ENCODE measurements at regions of chr2 and their contacts with region 1.

Region 1: GRCh38 chr2:200373973-200374416 is 67.5 kb downstream of the SPATS2L start:
- DNase-seq: peak in 7 of 9 donors; percentile 41 to 66 (median 56)
- ATAC-seq: peak; percentile 86
- H3K4me3 ChIP-seq: peak overlapping the region; percentile 74
- H3K4me3 Mint-ChIP-seq: peak overlapping the region; percentile 74 to 96 (median 89)
- H3K27ac ChIP-seq: peak overlapping the region; percentile 66
- H3K27ac Mint-ChIP-seq: peak overlapping the region; percentile 86 to 96 (median 93)
- H3K4me1 ChIP-seq: peaks cover 32 to 34% of the 10 kb centered on the region in 2 donors
- H3K4me1 Mint-ChIP-seq: peaks cover 24 to 59% (median 52%) of the 10 kb centered on the region in 7 donors
- H3K27me3 ChIP-seq: no peaks in the 10 kb centered on the region
- H3K27me3 Mint-ChIP-seq: no peaks in the 10 kb centered on the region

Region 2: DNA sequence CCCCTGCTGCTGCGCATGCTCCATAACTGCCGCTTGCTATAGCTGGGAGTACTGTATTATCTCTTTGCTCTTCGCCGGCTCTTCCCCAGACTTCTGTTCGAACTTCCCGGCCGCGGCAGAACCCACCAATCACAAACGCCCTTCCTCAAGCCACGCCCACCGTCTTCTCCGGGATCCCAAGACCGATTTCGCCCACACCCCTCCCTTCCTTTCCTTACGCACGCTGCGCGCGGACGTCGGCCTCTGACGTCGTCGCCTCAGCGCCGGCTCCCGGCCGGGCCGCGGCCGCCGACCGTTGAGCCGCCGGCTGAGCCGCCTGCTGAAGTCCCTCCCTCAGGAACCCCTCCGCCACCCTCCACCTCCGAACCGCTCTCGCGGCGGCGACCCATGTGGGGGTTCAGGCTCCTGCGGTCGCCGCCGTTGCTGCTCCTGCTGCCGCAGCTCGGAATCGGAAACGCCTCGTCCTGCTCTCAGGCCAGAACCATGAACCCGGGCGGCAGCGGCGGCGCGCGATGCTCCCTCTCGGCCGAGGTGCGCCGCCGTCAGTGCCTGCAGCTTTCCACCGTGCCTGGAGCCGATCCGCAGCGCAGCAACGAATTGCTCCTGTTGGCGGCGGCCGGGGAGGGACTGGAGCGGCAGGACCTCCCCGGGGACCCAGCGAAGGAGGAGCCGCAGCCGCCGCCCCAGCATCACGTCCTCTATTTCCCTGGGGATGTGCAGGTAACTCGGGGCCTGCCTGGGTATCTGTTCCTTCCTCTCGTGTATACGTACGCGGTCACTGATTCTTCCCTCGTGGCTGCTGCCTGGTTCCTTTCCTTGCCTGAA is 462.7 kb before region 1 on chr2 and contains the start of gene C2orf69:
- CTCF ChIA-PET with region 1: no interaction called
- POLR2A ChIA-PET with region 1: no interaction called
- intact Hi-C with region 1: loop called in 1 of 2 experiments (anchors 5 kb)
- DNase-seq: peak; percentile 80 to 92 (median 83)
- ATAC-seq: peak; percentile 93
- H3K4me3 ChIP-seq: peak within 1 kb of the TSS; percentile 75
- H3K4me3 Mint-ChIP-seq: peak within 1 kb of the TSS; percentile 89 to 100 (median 98)
- H3K27ac ChIP-seq: peak within 1 kb of the TSS; percentile 89
- H3K27ac Mint-ChIP-seq: peak within 1 kb of the TSS; percentile 72 to 95 (median 94)
- H3K4me1 ChIP-seq: peaks cover 11 to 19% of the 10 kb centered on the region in 2 donors
- H3K4me1 Mint-ChIP-seq: peaks cover 26 to 47% (median 37%) of the 10 kb centered on the region in 7 donors
- H3K27me3 ChIP-seq: no peaks in the 10 kb centered on the region
- H3K27me3 Mint-ChIP-seq: peaks cover 0 to 14% (median 8%) of the 10 kb centered on the region in 5 donors
- total RNA-seq, gene C2orf69: 10.1 to 15.4 (median 12.7) TPM

Region 3: DNA sequence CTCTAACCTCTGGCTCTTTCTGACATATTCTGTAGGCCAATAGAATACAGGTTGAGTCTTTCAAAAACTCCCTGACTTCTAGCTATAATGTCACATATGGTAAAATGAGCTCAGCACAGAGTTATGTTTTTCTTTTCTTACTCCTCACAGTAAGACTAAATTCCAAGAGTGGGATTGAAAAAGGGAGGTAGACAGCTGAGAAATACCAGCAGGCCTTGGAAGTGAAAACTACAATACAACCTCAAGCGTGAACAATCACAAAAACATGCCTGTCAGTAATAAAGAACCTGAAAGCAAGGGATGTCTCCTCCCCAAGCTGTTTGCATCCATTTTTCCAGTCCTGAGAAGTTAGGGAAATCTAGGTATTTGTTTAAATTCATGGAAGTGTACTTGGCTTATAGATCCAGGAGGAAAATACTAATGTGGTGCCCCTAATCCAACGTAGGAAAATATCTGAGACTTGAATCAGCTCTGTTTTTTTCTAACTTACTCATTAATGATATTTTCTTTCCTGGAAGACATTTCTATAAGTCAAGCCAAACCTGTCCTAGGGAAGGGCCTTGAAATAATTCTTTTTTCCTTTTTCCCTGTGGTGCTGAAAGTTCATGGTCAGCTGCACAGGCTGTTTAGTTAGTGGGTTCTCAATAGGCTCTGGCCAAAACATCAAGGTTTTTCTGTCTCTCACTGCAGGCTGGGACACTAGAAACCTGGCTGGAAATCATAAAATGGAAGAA is 235.4 kb before region 1 on chr2:
- CTCF ChIA-PET with region 1: no interaction called
- POLR2A ChIA-PET with region 1: no interaction called
- intact Hi-C with region 1: no loop called
- DNase-seq: no peak
- ATAC-seq: no peak
- H3K4me3 ChIP-seq: no peak overlapping the region
- H3K4me3 Mint-ChIP-seq: no peak overlapping the region
- H3K27ac ChIP-seq: no peak overlapping the region
- H3K27ac Mint-ChIP-seq: no peak overlapping the region
- H3K4me1 ChIP-seq: no peaks in the 10 kb centered on the region
- H3K4me1 Mint-ChIP-seq: no peaks in the 10 kb centered on the region
- H3K27me3 ChIP-seq: no peaks in the 10 kb centered on the region
- H3K27me3 Mint-ChIP-seq: peaks cover 0 to 7% (median 0%) of the 10 kb centered on the region in 5 donors

Region 4: DNA sequence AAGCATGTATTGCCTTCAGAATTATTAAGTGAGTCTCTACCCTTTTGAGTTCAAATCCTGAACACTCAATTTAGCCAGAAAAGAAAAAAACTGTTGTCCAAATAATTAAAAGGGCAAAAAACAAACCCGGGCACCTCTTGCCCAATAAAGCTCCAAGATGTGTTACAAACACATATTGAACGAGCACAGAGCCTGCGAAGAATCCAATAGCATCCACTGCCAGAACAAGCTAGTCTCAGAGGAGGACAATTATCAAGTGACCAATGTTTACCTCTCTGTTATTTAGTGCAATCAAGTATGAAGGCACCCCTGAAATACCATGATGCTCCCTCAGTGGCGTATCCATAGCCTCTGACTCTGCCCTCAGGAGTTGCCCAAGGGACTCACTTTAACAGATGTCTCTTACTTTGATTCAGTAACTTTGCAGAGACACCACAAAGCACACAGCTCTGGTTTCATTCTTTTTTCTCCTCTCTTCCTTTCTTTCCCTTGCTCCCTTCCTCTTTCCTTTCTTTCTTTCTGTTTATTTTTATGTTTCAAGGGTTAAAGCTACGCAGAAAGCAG is 161.1 kb before region 1 on chr2:
- CTCF ChIA-PET with region 1: no interaction called
- POLR2A ChIA-PET with region 1: no interaction called
- intact Hi-C with region 1: no loop called
- DNase-seq: no peak
- ATAC-seq: no peak
- H3K4me3 ChIP-seq: no peak overlapping the region
- H3K4me3 Mint-ChIP-seq: no peak overlapping the region
- H3K27ac ChIP-seq: no peak overlapping the region
- H3K27ac Mint-ChIP-seq: no peak overlapping the region
- H3K4me1 ChIP-seq: no peaks in the 10 kb centered on the region
- H3K4me1 Mint-ChIP-seq: peaks cover 0 to 1% (median 0%) of the 10 kb centered on the region in 7 donors
- H3K27me3 ChIP-seq: no peaks in the 10 kb centered on the region
- H3K27me3 Mint-ChIP-seq: peaks cover 6 to 34% (median 15%) of the 10 kb centered on the region in 5 donors

Region 5: GRCh38 chr2:200306196-200306930 is 67.6 kb before region 1 on chr2 and contains the start of gene SPATS2L:
- CTCF ChIA-PET with region 1: no interaction called
- POLR2A ChIA-PET with region 1: no interaction called
- intact Hi-C with region 1: loop called (anchors 2 kb)
- DNase-seq: peak in 7 of 9 donors; percentile 12 to 36 (median 22)
- ATAC-seq: peak; percentile 58
- H3K4me3 ChIP-seq: peak within 1 kb of the TSS; percentile 63
- H3K4me3 Mint-ChIP-seq: peak within 1 kb of the TSS; percentile 86 to 96 (median 92)
- H3K27ac ChIP-seq: no peak within 1 kb of the TSS
- H3K27ac Mint-ChIP-seq: peak within 1 kb of the TSS in 7 of 9 donors; percentile 14 to 88 (median 63)
- H3K4me1 ChIP-seq: peaks cover 0 to 4% of the 10 kb centered on the region in 2 donors
- H3K4me1 Mint-ChIP-seq: peaks cover 7 to 32% (median 11%) of the 10 kb centered on the region in 7 donors
- H3K27me3 ChIP-seq: no peaks in the 10 kb centered on the region
- H3K27me3 Mint-ChIP-seq: peaks cover 0 to 58% (median 16%) of the 10 kb centered on the region in 5 donors
- total RNA-seq, gene SPATS2L: 2.3 to 51.9 (median 3.5) TPM

Region 6: GRCh38 chr2:200471324-200471848 is 97.4 kb after region 1 on chr2:
- CTCF ChIA-PET with region 1: interaction called, 4 read pairs
- POLR2A ChIA-PET with region 1: interaction called, 19 read pairs
- intact Hi-C with region 1: loop called (anchors 1 kb)
- DNase-seq: peak in 7 of 9 donors; percentile 20 to 47 (median 39)
- ATAC-seq: peak; percentile 56
- H3K4me3 ChIP-seq: no peak overlapping the region
- H3K4me3 Mint-ChIP-seq: peak overlapping the region in 7 of 10 donors; percentile 1 to 81 (median 46)
- H3K27ac ChIP-seq: no peak overlapping the region
- H3K27ac Mint-ChIP-seq: peak overlapping the region in 3 of 9 donors; percentile 32 to 64 (median 44)
- H3K4me1 ChIP-seq: peaks cover 20 to 30% of the 10 kb centered on the region in 2 donors
- H3K4me1 Mint-ChIP-seq: peaks cover 23 to 41% (median 35%) of the 10 kb centered on the region in 7 donors
- H3K27me3 ChIP-seq: no peaks in the 10 kb centered on the region
- H3K27me3 Mint-ChIP-seq: no peaks in the 10 kb centered on the region

Region 7: DNA sequence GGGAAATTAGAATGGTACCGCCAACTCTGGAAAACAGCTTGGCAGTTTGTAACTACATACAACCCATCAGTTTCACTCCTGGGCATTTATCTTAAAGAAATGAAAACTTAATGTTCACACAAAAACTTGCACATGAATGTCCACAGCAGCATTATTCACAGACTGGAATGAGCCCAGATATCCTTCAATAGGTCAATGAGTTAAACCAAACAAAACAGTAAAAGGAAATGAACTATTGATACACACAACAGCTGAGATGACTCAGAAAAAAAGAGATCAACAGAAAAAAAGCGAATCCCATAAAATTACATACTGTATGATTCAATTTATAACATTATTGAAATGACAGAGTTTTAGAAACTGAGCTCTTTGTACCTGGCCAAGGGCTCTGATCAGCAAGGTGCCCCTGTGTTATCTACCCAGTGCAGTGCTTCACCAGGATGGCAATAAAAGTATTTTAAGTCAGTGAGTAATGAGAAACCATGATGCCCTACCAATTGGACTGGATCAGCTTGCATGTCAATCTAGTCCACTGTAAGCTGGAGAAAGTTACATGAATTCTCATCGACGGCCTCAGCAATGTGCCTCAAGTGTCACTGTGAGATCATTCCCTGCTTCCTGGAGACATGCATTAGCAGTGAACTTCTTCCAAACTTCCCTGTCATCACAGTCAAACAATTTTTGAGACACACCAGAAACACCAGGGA is 1247.5 kb after region 1 on chr2:
- CTCF ChIA-PET with region 1: no interaction called
- POLR2A ChIA-PET with region 1: no interaction called
- intact Hi-C with region 1: no loop called
- DNase-seq: no peak
- ATAC-seq: no peak
- H3K4me3 ChIP-seq: no peak overlapping the region
- H3K4me3 Mint-ChIP-seq: no peak overlapping the region
- H3K27ac ChIP-seq: no peak overlapping the region
- H3K27ac Mint-ChIP-seq: no peak overlapping the region
- H3K4me1 ChIP-seq: no peaks in the 10 kb centered on the region
- H3K4me1 Mint-ChIP-seq: no peaks in the 10 kb centered on the region
- H3K27me3 ChIP-seq: no peaks in the 10 kb centered on the region
- H3K27me3 Mint-ChIP-seq: peaks cover 0 to 3% (median 0%) of the 10 kb centered on the region in 5 donors

Region 8: GRCh38 chr2:201780674-201781581 is 1406.9 kb after region 1 on chr2 and contains the start of gene ALS2:
- CTCF ChIA-PET with region 1: no interaction called
- POLR2A ChIA-PET with region 1: no interaction called
- intact Hi-C with region 1: loop called in 1 of 2 experiments (anchors 5 kb)
- DNase-seq: peak; percentile 91 to 97 (median 95)
- ATAC-seq: peak; percentile 96
- H3K4me3 ChIP-seq: peak within 1 kb of the TSS; percentile 96
- H3K4me3 Mint-ChIP-seq: peak within 1 kb of the TSS; percentile 87 to 99 (median 98)
- H3K27ac ChIP-seq: peak within 1 kb of the TSS; percentile 84
- H3K27ac Mint-ChIP-seq: peak within 1 kb of the TSS; percentile 84 to 99 (median 97)
- H3K4me1 ChIP-seq: peaks cover 7 to 10% of the 10 kb centered on the region in 2 donors
- H3K4me1 Mint-ChIP-seq: peaks cover 5 to 36% (median 21%) of the 10 kb centered on the region in 7 donors
- H3K27me3 ChIP-seq: no peaks in the 10 kb centered on the region
- H3K27me3 Mint-ChIP-seq: peaks cover 0 to 22% (median 0%) of the 10 kb centered on the region in 5 donors
- total RNA-seq, gene ALS2: 8.9 to 13.5 (median 10.7) TPM